Sciatic nerve (tissue), 2 donors: ENCODE measurements at regions of chr5 and their contacts with region 1.

Region 1: GRCh38 chr5:153619771-153620170 is 129.3 kb downstream of the GRIA1 start:
- DNase-seq: no peak
- ATAC-seq: no peak

Region 2: GRCh38 chr5:154701110-154701572 is 1081.4 kb after region 1 on chr5:
- intact Hi-C with region 1: loop called (anchors 5 kb)
- DNase-seq: no peak
- ATAC-seq: no peak